Transverse colon (tissue), 4 donors: ENCODE measurements at regions of chr1 and their contacts with region 1.

Region 1: GRCh38 chr1:232589812-232590743 is 39.9 kb downstream of the SIPA1L2 start:
- DNase-seq: no peak
- H3K4me3 ChIP-seq: no peak overlapping the region
- H3K27ac ChIP-seq: peak overlapping the region; percentile 16 to 61 (median 36)
- H3K4me1 ChIP-seq: peaks cover 0 to 31% (median 4%) of the 10 kb centered on the region in 4 donors
- H3K27me3 ChIP-seq: no peaks in the 10 kb centered on the region
- CTCF ChIP-seq: no peak
- EP300 ChIP-seq: no peak
- POLR2A ChIP-seq: no peak

Region 2: GRCh38 chr1:232542638-232543593 is 47.2 kb before region 1 on chr1:
- in situ Hi-C with region 1: no loop called
- intact Hi-C with region 1: loop called (anchors 2 kb)
- DNase-seq: no peak
- H3K4me3 ChIP-seq: no peak overlapping the region
- H3K27ac ChIP-seq: no peak overlapping the region
- H3K4me1 ChIP-seq: peaks cover 0 to 6% (median 1%) of the 10 kb centered on the region in 4 donors
- H3K27me3 ChIP-seq: no peaks in the 10 kb centered on the region
- CTCF ChIP-seq: no peak
- EP300 ChIP-seq: no peak
- POLR2A ChIP-seq: no peak

Region 3: GRCh38 chr1:232728507-232729263 is 138.6 kb after region 1 on chr1:
- in situ Hi-C with region 1: no loop called
- intact Hi-C with region 1: no loop called
- DNase-seq: no peak
- H3K4me3 ChIP-seq: no peak overlapping the region
- H3K27ac ChIP-seq: no peak overlapping the region
- H3K4me1 ChIP-seq: no peaks in the 10 kb centered on the region
- H3K27me3 ChIP-seq: no peaks in the 10 kb centered on the region
- CTCF ChIP-seq: no peak
- EP300 ChIP-seq: no peak
- POLR2A ChIP-seq: no peak